Ascending aorta (tissue), 2 donors: ENCODE measurements at regions of chr10 and their contacts with region 1.

Region 1: DNA sequence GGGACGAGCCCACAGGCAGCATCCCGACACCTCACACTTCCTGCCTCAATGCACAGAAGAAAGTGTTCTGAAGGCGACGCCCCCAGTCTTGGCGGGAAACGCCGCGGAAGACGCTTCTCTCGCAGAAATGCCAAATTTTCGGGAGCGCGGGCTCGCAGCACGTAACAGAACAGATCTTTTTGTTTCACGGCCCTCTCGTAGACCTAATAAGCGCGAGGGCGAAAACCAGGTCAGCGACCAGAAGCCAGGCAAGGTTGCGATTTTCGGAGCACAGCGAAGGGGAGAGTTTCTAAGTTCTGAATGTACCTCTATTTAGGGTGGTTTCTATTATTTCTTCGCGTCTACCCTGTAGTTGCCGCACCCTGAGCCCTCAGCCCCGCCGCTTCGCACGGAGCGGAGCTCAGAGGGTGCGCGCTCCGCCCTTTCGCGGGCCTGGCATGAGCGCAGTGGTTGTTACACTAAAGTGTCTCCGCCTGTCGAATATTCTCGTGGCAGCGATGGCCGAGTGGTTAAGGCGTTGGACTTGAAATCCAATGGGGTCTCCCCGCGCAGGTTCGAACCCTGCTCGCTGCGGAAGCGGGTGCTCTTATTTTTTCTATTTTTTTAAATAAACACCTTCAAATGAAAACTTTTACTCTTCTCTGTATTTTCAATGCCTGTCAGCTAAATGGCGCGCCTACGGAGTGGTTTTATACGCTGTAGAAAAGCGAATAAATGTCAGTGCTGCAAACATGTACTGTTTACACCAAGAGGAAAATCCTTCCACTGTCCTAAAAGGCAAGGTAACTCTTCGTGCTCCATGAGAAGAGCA is 68.2 kb upstream of the CTNNA3 start:
- DNase-seq: peak; percentile 75 to 97
- H3K4me3 ChIP-seq: peak overlapping the region; percentile 76 to 78
- H3K27ac ChIP-seq: peak overlapping the region; percentile 92 to 95
- H3K4me1 ChIP-seq: no peaks in the 10 kb centered on the region
- H3K27me3 ChIP-seq: no peaks in the 10 kb centered on the region
- CTCF ChIP-seq: no peak

Region 2: DNA sequence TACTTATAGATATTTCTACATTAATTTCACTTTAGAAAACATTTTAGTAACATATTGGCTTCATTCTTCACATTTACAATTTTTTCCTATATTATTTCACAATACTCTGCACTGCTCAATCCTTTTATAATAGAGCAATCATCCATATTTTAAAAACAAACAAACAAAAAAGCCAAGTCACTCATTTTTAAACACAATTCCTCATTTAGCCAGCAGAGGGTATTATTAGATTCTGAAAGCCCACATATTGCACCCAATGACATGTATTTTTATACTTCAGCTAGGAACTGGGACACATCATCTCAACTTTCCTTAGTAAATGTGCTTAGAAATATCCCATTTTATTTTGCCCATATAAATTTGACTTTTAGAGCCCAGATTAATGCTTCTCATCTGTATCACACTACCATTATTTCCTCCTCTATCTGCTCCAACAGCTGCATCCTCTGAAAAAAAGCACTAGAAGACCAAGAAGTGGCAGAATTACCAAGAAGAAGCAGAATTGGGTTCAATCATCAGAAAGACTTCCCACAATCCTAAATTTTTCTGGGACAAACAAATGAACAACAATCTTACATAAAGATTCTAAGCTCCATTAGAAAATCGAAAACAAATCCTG is 97.7 kb before region 1 on chr10:
- intact Hi-C with region 1: loop called (anchors 5 kb)
- DNase-seq: no peak
- H3K4me3 ChIP-seq: no peak overlapping the region
- H3K27ac ChIP-seq: peak overlapping the region in 1 of 2 donors; percentile 1
- H3K4me1 ChIP-seq: no peaks in the 10 kb centered on the region
- H3K27me3 ChIP-seq: no peaks in the 10 kb centered on the region
- CTCF ChIP-seq: peak in 2 of 3 experiments; percentile 49 to 56

Region 3: DNA sequence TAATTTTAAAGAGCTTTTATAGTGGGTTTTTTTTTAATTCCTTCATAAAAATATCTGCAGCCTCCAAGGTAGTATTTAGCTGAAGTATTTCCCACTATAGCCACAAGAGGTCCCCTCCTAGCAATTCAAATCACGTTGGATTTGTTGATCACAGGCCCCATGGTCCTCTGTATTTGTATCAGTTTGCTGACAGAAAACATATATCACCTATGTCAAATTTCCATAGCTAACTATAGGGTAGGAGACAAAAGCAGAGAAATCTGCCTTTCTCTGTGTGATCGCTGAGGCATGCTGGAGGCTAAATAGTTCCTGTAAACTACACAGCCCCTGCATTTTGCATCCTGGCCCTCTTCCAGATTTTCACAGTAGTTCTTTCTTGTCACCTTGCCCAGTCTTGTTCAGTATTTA is 66.5 kb before region 1 on chr10:
- intact Hi-C with region 1: loop called (anchors 2 kb)
- DNase-seq: no peak
- H3K4me3 ChIP-seq: no peak overlapping the region
- H3K27ac ChIP-seq: no peak overlapping the region
- H3K4me1 ChIP-seq: peaks cover 0 to 4% of the 10 kb centered on the region in 2 donors
- H3K27me3 ChIP-seq: no peaks in the 10 kb centered on the region
- CTCF ChIP-seq: peak; percentile 26 to 68 (median 52)

Region 4: DNA sequence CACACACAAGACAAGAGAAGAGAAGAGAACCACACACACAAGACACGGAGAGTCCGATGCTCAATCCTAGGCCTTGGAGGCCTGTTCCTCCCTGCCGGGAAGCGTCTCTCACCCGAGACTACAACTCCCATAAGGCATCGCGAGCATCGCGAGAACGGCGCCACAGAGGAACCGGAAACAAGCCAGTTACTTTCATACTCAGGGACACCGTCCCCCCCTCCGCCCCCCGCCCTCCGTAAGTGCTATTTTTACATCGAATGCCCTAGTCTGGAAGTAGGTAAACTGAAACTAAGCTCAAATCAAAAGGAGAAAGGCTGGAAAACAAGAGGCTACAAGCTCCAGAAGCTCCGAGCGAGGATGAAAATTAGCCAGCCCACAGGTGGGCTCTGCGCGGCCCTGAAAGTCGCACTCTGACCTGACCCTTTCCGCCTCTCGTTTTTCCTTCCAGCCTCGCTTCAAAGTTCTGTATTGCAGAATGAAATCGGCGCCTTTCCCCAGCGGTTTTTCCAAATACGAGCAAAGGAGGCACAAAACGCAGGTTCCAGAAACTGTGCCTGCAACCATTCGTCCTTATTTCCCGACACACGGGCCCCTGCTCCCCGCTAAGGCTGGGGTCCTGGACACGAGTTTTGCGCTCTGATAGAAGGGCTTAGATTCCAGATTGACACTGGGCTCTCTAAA is 85.3 kb after region 1 on chr10:
- intact Hi-C with region 1: loop called (anchors 2 kb)
- DNase-seq: peak; percentile 78 to 98
- H3K4me3 ChIP-seq: peak overlapping the region; percentile 77 to 87
- H3K27ac ChIP-seq: peak overlapping the region; percentile 92 to 94
- H3K4me1 ChIP-seq: peaks cover 3 to 5% of the 10 kb centered on the region in 2 donors
- H3K27me3 ChIP-seq: no peaks in the 10 kb centered on the region
- CTCF ChIP-seq: no peak

Region 5: DNA sequence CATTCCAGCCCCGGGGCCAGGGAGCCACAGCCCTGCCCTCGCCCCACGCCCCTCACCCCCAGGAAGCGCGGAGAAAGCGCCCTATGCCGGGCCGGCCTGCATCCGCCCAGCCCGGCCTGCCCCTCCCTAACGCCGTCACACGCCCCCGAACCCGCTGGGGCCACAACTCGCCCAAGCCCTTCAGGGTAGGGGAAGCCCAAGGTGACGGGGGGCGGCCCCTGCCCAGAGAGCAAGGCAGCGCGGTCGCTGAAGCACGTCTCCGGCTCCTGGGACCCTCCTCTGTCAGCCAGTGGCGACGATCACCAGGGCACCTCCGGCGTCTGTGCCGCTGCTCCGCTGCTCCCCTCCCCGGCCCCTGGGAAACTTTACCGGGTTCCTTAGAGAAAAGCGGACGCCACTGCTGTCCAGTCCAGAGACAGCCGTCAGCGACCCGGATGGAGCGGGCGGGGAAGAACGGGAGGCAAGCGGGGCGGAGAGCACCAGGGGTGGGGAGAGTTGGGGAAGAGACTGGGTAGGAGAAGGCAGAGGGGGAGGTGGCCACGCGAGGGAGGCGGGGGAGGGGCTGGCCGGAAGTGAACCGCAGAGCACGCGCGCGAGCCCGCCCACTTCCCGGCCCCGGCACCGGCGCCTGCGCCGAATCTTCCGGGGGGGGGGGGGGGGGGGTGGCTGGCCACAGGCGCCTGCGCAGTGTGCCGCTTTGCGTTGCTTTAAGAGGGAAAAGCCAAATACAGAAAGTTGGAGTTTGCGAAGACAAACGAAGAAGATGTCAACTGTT is 310.7 kb after region 1 on chr10 and contains the start of gene HERC4:
- intact Hi-C with region 1: loop called (anchors 5 kb)
- DNase-seq: peak; percentile 72 to 97
- H3K4me3 ChIP-seq: peak within 1 kb of the TSS; percentile 87 to 99
- H3K27ac ChIP-seq: peak within 1 kb of the TSS; percentile 99 to 100
- H3K4me1 ChIP-seq: peaks cover 0 to 6% of the 10 kb centered on the region in 2 donors
- H3K27me3 ChIP-seq: no peaks in the 10 kb centered on the region
- CTCF ChIP-seq: no peak
- total RNA-seq, gene HERC4: 15.0 TPM

Region 6: DNA sequence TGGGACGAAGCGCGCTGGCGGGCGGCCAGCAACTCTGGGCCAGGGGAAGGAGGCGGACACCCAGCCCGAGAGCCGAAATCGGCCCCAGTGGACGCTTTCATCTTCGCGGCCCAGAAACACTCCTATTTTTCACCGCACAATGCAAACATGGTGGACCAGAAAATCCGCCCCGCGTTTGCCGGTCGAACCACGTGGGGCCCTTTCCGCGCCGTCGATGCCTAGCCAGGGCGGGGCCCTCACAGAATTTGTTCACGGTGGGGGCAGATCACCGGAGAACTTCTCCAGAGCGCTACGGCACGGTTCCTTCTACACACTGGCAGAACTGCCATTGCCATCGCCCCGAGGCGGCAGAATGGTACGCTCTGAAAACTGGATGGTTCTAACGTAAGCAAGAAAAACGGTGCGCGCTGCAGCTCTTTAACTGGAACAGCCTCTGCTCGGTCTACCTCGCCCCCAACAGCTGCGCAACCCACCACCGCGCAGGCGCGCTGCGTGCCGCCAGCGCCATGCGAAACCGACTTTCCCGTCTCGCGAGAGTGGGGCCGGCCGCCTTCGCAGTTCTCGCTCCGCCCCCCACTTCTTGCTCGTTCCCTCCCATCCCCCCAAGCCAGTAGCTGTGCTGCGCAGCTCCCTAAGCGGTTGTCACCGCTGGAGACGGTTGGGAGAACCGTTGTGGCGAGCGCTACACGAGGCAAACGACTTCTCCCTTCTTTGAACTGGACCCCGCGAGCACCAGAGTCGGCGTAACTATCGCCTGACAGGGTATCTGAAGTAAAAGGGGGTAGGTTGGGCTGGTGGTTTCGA is 567.4 kb after region 1 on chr10 and contains the start of gene HNRNPH3:
- intact Hi-C with region 1: loop called (anchors 5 kb)
- DNase-seq: peak; percentile 85 to 98
- H3K4me3 ChIP-seq: peak within 1 kb of the TSS; percentile 94 to 98
- H3K27ac ChIP-seq: peak within 1 kb of the TSS; percentile 100
- H3K4me1 ChIP-seq: peaks cover 4 to 5% of the 10 kb centered on the region in 2 donors
- H3K27me3 ChIP-seq: no peaks in the 10 kb centered on the region
- CTCF ChIP-seq: no peak
- total RNA-seq, gene HNRNPH3: 12.6 TPM